GM12878 (cell line): ENCODE measurements at regions of chr10 and their contacts with region 1.

Region 1: GRCh38 chr10:112471878-112472487 is 25.0 kb downstream of the VTI1A start:
- DNase-seq: peak; percentile 25
- ATAC-seq: peak; percentile 91
- H3K4me3 ChIP-seq: no peak overlapping the region
- H3K27ac ChIP-seq: no peak overlapping the region
- H3K4me1 ChIP-seq: no peaks in the 10 kb centered on the region
- H3K27me3 ChIP-seq: no peaks in the 10 kb centered on the region
- CTCF ChIP-seq: peak; percentile 56 to 82 (median 68); a peak in 5 of 6 replicates
- EP300 ChIP-seq: no peak
- POLR2A ChIP-seq: no peak
- RAD21 ChIP-seq: peak; percentile 78

Region 2: DNA sequence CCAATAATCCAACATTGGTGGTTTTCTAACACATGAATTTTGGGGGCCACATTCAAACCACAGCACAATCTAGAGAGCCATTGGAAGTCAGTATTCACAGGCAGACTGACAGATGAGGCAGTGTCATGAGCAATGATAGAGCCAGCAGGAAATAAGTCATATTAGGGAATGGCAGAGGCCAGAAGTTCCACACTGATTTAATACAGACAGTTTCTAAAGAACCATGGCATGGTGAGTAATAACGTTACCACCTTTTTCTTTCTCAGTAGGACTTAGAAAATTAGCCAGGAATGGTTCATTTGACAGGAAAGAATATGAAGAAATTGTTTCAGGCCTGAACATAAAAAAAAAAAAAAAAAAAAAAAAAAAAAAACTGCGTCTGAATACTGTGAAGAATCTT is 498.7 kb before region 1 on chr10:
- CTCF ChIA-PET with region 1: no interaction called
- POLR2A ChIA-PET with region 1: no interaction called
- RAD21 ChIA-PET with region 1: no interaction called
- SMC1A ChIA-PET with region 1: no interaction called
- in situ Hi-C with region 1: no loop called
- intact Hi-C with region 1: no loop called
- DNase-seq: no peak
- ATAC-seq: no peak
- H3K4me3 ChIP-seq: no peak overlapping the region
- H3K27ac ChIP-seq: no peak overlapping the region
- H3K4me1 ChIP-seq: no peaks in the 10 kb centered on the region
- H3K27me3 ChIP-seq: no peaks in the 10 kb centered on the region; a peak in 1 of 4 replicates
- CTCF ChIP-seq: no peak
- EP300 ChIP-seq: no peak
- POLR2A ChIP-seq: no peak
- RAD21 ChIP-seq: no peak

Region 3: GRCh38 chr10:112307358-112308124 is 164.4 kb before region 1 on chr10:
- CTCF ChIA-PET with region 1: interaction called, 12 read pairs
- POLR2A ChIA-PET with region 1: no interaction called
- RAD21 ChIA-PET with region 1: no interaction called
- SMC1A ChIA-PET with region 1: interaction called, 3 read pairs
- in situ Hi-C with region 1: no loop called
- intact Hi-C with region 1: no loop called
- DNase-seq: no peak
- ATAC-seq: peak; percentile 89
- H3K4me3 ChIP-seq: no peak overlapping the region
- H3K27ac ChIP-seq: no peak overlapping the region
- H3K4me1 ChIP-seq: no peaks in the 10 kb centered on the region
- H3K27me3 ChIP-seq: no peaks in the 10 kb centered on the region
- CTCF ChIP-seq: peak; percentile 75 to 84 (median 78)
- EP300 ChIP-seq: no peak
- POLR2A ChIP-seq: no peak
- RAD21 ChIP-seq: peak; percentile 68

Region 4: DNA sequence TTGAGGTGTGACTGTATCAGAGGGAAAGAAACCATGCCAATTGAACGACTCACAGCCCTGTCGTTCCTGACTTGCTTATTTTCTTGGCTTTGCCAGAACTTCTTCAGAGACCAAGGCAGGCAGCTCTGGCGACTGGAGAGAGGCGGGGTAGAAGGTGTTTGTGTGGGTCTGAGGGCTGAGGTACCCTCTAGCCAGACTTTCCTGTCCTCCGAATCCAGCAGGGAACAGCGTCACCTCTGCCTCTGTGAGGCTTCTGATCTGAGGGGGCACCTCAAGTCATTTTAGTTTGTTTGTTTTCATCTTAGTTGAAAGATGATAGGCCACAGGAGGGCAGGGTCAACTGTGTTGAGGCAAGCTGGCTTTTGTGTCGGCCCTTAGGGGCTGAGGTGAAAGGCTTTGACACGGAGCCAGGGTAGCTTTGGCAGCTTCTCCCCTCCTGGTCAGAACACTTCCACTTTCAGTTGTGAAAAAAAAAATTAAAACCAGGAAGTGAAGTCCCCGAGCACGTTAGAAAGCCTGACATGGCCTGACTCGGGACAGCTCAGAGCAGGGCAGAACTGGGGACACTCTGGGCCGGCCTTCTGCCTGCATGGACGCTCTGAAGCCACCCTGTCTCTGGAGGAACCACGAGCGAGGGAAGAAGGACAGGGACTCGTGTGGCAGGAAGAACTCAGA is 96.1 kb before region 1 on chr10:
- CTCF ChIA-PET with region 1: interaction called, 18 read pairs
- POLR2A ChIA-PET with region 1: no interaction called
- RAD21 ChIA-PET with region 1: interaction called, 14 read pairs
- SMC1A ChIA-PET with region 1: interaction called, 7 read pairs
- in situ Hi-C with region 1: no loop called
- intact Hi-C with region 1: no loop called
- DNase-seq: peak; percentile 48
- ATAC-seq: peak; percentile 87
- H3K4me3 ChIP-seq: peak overlapping the region; percentile 99
- H3K27ac ChIP-seq: peak overlapping the region; percentile 95
- H3K4me1 ChIP-seq: peaks cover 9% of the 10 kb centered on the region
- H3K27me3 ChIP-seq: no peaks in the 10 kb centered on the region
- CTCF ChIP-seq: no peak
- EP300 ChIP-seq: no peak
- POLR2A ChIP-seq: peak; percentile 90
- RAD21 ChIP-seq: no peak

Region 5: GRCh38 chr10:112461029-112461887 is 10.7 kb before region 1 on chr10:
- CTCF ChIA-PET with region 1: interaction called, 26 read pairs
- POLR2A ChIA-PET with region 1: no interaction called
- RAD21 ChIA-PET with region 1: interaction called, 5 read pairs
- SMC1A ChIA-PET with region 1: interaction called, 4 read pairs
- in situ Hi-C with region 1: no loop called
- intact Hi-C with region 1: no loop called
- DNase-seq: no peak
- ATAC-seq: no peak
- H3K4me3 ChIP-seq: no peak overlapping the region
- H3K27ac ChIP-seq: no peak overlapping the region; the same call in 1 of the 2 replicates
- H3K4me1 ChIP-seq: no peaks in the 10 kb centered on the region
- H3K27me3 ChIP-seq: no peaks in the 10 kb centered on the region
- CTCF ChIP-seq: no peak
- EP300 ChIP-seq: no peak
- POLR2A ChIP-seq: no peak
- RAD21 ChIP-seq: no peak

Region 6: DNA sequence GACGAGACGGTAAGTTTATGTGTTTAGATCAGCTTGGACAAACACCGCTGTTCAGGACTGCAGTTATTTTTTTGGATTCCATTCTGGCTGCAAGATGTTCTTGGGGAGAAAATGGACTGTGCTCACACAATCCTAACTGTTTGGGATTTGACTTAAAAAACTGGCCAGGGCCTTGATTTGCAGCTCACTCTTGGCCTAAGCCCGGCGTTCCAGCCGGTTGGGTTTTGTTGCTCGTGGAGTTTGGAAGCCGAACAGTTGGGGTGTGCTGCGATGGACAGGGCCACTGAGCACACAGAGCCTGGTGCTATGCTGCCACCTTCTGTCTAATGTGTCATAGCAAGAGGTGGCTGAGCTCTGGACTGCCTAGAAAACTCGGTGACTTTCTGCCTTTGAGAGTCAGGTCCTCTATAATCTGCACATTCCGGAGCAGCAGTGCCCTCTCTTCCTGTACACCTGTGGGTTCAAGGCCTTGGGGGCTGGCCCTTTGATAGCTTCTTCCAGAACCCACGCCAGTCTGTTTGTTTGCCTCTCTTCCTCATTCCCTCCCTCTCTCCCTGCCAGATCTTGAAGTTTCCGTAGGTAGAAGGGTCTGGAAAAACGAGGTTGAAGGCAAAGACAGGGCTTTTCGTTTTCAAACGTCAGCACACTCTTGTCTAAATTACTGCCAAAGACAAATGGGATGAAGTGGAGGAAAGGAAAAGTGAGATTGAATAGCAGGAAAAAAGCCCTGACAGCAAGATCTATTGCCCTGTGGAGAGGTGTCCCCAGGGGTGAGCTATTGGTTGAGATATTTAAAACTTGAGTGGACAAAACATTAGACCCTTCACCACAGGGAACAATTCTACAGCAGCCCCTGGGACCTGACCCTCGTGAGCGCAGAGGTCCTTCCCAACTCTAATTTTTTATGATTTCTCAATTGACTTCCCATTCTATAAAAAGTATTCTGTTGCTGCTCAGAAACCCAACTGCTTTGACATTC is 913.3 kb after region 1 on chr10:
- CTCF ChIA-PET with region 1: interaction called, 14 read pairs
- POLR2A ChIA-PET with region 1: no interaction called
- RAD21 ChIA-PET with region 1: interaction called, 6 read pairs
- SMC1A ChIA-PET with region 1: interaction called, 4 read pairs
- in situ Hi-C with region 1: loop called (anchors 10 kb)
- intact Hi-C with region 1: loop called (anchors 5 kb)
- DNase-seq: no peak
- ATAC-seq: peak; percentile 98
- H3K4me3 ChIP-seq: no peak overlapping the region
- H3K27ac ChIP-seq: no peak overlapping the region
- H3K4me1 ChIP-seq: no peaks in the 10 kb centered on the region
- H3K27me3 ChIP-seq: peaks cover 0 to 4% of the 10 kb centered on the region in 2 experiments; a peak in 2 of 4 replicates
- CTCF ChIP-seq: peak; percentile 72 to 82 (median 73); a peak in 5 of 6 replicates
- EP300 ChIP-seq: no peak
- POLR2A ChIP-seq: no peak
- RAD21 ChIP-seq: peak; percentile 87

Region 7: GRCh38 chr10:113563306-113564088 is 1091.5 kb after region 1 on chr10:
- CTCF ChIA-PET with region 1: interaction called, 7 read pairs
- POLR2A ChIA-PET with region 1: no interaction called
- RAD21 ChIA-PET with region 1: interaction called, 3 read pairs
- SMC1A ChIA-PET with region 1: no interaction called
- in situ Hi-C with region 1: no loop called
- intact Hi-C with region 1: loop called (anchors 5 kb)
- DNase-seq: no peak
- ATAC-seq: peak; percentile 97
- H3K4me3 ChIP-seq: no peak overlapping the region
- H3K27ac ChIP-seq: no peak overlapping the region
- H3K4me1 ChIP-seq: no peaks in the 10 kb centered on the region
- H3K27me3 ChIP-seq: peaks cover 0 to 2% of the 10 kb centered on the region in 2 experiments; a peak in 2 of 4 replicates
- CTCF ChIP-seq: peak; percentile 87 to 99 (median 98)
- EP300 ChIP-seq: no peak
- POLR2A ChIP-seq: no peak
- RAD21 ChIP-seq: peak; percentile 82